ENCODE measurements at regions of chr7 and their contacts with region 1.

Region 1: DNA sequence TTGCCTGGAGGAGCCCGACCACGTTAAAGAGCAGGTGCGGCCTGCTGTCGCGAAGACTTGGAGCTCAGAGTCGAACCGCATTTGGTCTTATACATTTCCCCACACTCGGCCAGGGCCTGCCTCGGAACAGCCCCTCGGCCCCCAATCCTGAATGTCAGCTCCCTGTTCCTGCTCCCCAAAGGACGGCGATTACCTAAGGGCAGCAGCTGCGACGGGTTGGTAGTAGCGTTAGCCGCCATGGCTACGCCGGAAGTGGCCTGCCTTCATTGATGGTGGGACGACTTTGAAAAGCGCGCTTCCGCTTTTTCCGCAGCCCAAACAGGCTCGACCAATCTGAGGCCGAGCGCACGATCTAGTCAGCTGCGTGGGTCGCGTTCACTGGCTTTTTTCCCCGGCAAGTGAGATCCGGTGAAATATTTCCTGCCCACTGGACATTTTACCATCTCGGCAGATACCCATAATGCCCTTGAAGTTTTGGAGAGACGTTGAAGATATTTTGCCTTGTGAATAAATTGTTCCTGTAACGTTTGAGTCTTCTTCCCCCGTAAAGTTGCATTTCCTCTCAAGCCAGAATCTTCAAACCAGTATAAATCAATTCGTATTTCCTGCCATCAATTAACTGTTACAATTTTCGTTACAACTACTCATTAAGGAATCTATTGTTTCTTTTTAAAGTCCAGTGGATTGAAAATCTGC is at the start of gene LSM5:
- H3K4me3 Mint-ChIP-seq: peak within 1 kb of the TSS; percentile 88
- H3K27ac Mint-ChIP-seq: peak within 1 kb of the TSS; percentile 95
- H3K4me1 Mint-ChIP-seq: peaks cover 5% of the 10 kb centered on the region
- H3K27me3 Mint-ChIP-seq: no peaks in the 10 kb centered on the region

Region 2: GRCh38 chr7:32564542-32564941 is 74.3 kb after region 1 on chr7:
- intact Hi-C with region 1: loop called (anchors 2 kb)
- H3K4me3 Mint-ChIP-seq: no peak overlapping the region
- H3K27ac Mint-ChIP-seq: no peak overlapping the region
- H3K4me1 Mint-ChIP-seq: peaks cover 6% of the 10 kb centered on the region
- H3K27me3 Mint-ChIP-seq: no peaks in the 10 kb centered on the region

Region 3: GRCh38 chr7:32694182-32694581 is 203.9 kb after region 1 on chr7:
- intact Hi-C with region 1: loop called (anchors 5 kb)
- H3K4me3 Mint-ChIP-seq: no peak overlapping the region
- H3K27ac Mint-ChIP-seq: no peak overlapping the region
- H3K4me1 Mint-ChIP-seq: peaks cover 11% of the 10 kb centered on the region
- H3K27me3 Mint-ChIP-seq: no peaks in the 10 kb centered on the region

Region 4: DNA sequence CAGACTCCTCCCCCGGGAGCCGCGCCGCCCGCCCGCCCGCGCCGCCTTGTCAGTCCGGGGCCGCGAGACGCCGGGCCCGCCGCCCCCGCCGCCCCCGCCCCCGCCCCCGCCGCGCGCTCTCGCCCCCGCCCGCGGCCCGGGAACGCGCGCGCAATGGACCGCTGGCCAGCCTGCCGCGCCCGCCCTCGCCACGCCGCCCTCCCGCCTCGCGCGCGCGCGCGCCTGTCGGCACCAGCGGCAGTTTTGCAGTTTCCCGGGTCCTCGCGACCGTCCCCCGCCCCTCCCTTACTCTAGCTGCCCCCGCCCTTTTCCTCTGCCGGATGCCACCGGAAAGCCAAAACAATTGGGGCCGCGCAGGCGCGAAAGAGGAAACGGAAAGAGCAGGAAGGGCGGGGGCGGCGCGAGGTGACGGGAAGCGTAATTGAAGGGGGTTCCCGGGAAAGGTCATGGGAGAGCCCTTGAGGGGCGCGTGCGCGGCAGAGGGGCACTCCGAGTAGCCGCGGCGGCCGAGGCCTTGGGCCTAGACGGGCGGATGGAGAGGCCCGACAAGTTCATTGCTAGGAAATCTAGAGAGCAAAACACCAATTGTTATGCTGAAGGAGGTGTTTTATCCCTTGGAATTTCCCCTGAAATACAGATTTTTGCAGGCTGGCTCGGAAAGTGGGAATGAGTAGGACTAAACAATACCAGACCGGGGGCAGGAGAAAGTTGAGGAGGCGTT is 401.7 kb after region 1 on chr7:
- intact Hi-C with region 1: loop called (anchors 5 kb)
- H3K4me3 Mint-ChIP-seq: peak overlapping the region; percentile 88
- H3K27ac Mint-ChIP-seq: peak overlapping the region; percentile 100
- H3K4me1 Mint-ChIP-seq: peaks cover 48% of the 10 kb centered on the region
- H3K27me3 Mint-ChIP-seq: no peaks in the 10 kb centered on the region

Measured in dendritic cell treated with granulocyte-macrophage colony-stimulating factor and Interleukin-4, amounts not matched to agents 40 ng/mL and 50 ng/mL, for 4 days (primary cell).